Prostate gland (tissue), 2 donors: ENCODE measurements at regions of chr1 and their contacts with region 1.

Region 1: DNA sequence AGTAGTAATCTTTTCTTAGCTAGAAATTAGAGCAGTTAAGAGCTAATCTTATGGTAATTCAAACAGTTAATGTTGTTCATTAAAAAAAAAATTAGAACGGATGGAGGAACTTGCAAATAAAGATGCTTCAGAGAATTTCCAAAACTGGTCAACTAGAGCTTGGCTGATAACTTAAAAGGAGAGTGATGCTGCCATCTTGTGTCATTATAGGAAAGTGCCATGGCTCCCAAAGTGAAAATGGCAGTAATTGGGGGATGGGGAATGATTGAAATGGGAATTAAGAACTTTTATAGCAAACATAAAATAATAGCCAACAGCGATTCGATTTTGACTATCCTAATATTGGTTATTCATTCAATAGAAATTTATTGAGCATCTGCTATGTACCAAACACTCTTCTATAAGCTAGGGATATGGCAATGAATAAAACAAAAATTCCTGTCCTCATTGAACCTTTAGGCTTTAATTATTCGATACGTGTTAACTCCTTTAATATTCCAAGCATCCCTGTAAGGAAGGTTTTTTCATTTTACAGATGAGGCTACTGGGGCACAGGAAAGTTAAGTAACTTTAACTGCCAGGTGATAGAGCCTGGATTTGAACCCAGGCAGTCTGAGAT is 5.7 kb upstream of the PLPP3 start:
- DNase-seq: peak; percentile 30
- H3K4me3 ChIP-seq: no peak overlapping the region
- H3K27ac ChIP-seq: no peak overlapping the region
- H3K4me1 ChIP-seq: no peaks in the 10 kb centered on the region
- H3K27me3 ChIP-seq: no peaks in the 10 kb centered on the region
- CTCF ChIP-seq: peak; percentile 51 to 89 (median 84)
- POLR2A ChIP-seq: no peak

Region 2: GRCh38 chr1:56709269-56709880 is 124.4 kb after region 1 on chr1:
- intact Hi-C with region 1: loop called (anchors 10 kb)
- DNase-seq: peak; percentile 36
- H3K4me3 ChIP-seq: no peak overlapping the region
- H3K27ac ChIP-seq: no peak overlapping the region
- H3K4me1 ChIP-seq: no peaks in the 10 kb centered on the region
- H3K27me3 ChIP-seq: no peaks in the 10 kb centered on the region
- CTCF ChIP-seq: peak; percentile 45 to 78 (median 65)
- POLR2A ChIP-seq: no peak

Region 3: DNA sequence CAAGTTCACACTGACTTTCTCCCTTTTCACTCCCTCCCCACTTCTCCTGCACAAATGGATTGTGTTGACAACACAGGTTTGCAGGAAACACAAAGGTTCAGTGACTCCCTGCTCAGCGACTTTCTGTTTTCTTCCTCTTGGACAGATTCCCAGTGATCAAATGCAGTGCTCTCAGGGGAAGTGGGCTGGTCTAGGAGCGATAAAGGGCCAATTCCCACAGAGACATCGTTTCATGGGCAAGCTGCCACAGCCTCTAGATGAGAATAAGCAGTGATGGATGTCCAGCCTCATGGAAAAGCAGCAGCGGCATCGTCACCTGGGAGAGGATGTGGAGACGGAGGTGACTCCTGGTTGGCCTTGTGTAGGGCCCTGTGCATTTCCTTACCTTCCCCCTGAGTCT is 203.6 kb after region 1 on chr1:
- intact Hi-C with region 1: no loop called
- DNase-seq: peak; percentile 60
- H3K4me3 ChIP-seq: no peak overlapping the region
- H3K27ac ChIP-seq: peak overlapping the region; percentile 43 to 77
- H3K4me1 ChIP-seq: peaks cover 5% of the 10 kb centered on the region
- H3K27me3 ChIP-seq: no peaks in the 10 kb centered on the region
- CTCF ChIP-seq: no peak
- POLR2A ChIP-seq: no peak